ENCODE measurements at regions of chr4 and their contacts with region 1.

Region 1: DNA sequence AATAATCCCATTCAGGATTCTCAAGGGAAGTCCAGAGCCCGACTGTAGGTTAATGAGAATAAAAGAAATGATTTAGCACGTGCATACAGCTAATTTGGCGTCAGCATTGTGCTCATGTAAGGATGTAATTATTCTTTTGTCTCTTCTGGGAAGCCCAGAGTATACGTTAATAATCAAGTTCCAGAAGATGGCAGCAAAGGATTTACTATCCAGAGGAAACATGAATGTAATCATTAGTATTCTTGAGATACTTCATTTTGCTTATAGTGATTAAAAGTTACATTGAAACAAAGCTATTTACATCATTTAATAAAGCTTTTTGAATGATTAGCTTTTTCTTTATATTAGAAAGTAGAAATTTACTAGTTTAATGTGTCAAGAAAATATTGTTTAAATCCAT is 27.1 kb upstream of the MAP9 start:
- DNase-seq: no peak
- H3K4me3 ChIP-seq: no peak overlapping the region
- H3K27ac ChIP-seq: no peak overlapping the region
- H3K27me3 ChIP-seq: no peaks in the 10 kb centered on the region
- CTCF ChIP-seq: peak; percentile 49

Region 2: DNA sequence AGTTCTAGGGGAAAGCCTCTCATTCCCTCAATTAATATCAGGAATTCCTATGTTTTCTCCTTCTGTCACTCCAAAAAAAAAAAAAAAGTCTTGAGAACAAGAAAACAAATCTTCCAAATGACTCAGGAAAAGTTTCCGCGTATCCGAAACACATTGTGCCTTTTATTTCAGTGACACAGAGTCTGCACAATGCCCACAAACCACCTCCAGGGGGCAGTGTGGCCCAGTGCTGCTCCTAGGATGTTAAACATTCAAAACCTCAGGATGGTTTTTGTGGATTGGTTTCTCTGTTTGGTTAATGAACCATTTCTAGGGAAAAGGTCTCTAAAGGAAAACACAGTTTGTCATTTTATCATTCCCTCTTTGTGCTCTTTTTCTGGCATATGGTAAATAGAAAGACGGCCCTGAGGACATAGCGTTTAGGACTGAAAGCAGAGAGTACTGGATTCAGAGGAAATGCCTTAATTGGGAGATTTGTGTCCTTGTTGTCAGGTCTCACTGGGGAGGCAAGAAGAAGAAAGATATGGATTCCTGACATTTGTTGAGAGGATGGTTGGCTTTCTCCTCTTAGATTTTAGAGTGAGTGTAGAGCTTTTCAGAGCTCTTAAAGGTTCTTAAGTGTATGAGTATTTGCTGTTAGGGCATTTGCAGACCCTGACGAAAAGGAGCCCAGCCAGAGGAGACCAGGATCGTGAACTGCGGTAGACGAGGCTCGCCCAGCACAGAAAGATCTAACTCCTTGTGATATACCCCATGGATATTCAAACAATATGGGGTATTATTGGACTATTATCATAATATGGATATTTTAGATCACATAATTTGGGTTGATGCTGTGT is 38.6 kb after region 1 on chr4:
- CTCF ChIA-PET with region 1: interaction called, 11 read pairs
- POLR2A ChIA-PET with region 1: no interaction called
- DNase-seq: no peak
- H3K4me3 ChIP-seq: no peak overlapping the region
- H3K27ac ChIP-seq: no peak overlapping the region
- H3K27me3 ChIP-seq: no peaks in the 10 kb centered on the region
- CTCF ChIP-seq: peak; percentile 99

Region 3: GRCh38 chr4:155777971-155778735 is 374.3 kb after region 1 on chr4:
- CTCF ChIA-PET with region 1: interaction called, 22 read pairs
- POLR2A ChIA-PET with region 1: interaction called, 4 read pairs
- DNase-seq: no peak
- H3K4me3 ChIP-seq: no peak overlapping the region
- H3K27ac ChIP-seq: no peak overlapping the region
- H3K27me3 ChIP-seq: no peaks in the 10 kb centered on the region
- CTCF ChIP-seq: no peak

Region 4: DNA sequence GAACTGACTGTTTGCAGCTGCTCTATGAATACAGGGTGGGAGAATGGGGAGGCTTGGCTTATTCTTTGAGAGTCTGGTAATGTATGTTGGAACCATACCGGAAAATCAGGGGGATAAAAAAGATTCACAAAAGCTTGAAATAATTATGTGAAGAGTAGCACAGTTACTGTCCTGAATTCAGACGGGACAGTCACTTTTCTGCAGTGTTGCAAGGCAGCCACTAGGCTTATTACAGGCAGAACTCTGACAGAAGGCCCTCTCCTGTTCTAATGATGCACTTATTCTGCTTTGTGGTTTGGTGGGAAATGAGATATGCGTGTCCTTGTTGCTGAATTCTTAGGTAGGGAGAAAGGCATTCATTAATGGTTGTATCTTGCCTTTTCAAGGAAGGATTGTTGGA is 392.1 kb after region 1 on chr4:
- CTCF ChIA-PET with region 1: interaction called, 23 read pairs
- POLR2A ChIA-PET with region 1: no interaction called
- DNase-seq: no peak
- H3K4me3 ChIP-seq: no peak overlapping the region
- H3K27ac ChIP-seq: no peak overlapping the region
- H3K27me3 ChIP-seq: no peaks in the 10 kb centered on the region
- CTCF ChIP-seq: peak; percentile 43

Region 5: GRCh38 chr4:155953151-155954114 is 549.5 kb after region 1 on chr4 and contains the start of gene CTSO:
- CTCF ChIA-PET with region 1: interaction called, 103 read pairs
- POLR2A ChIA-PET with region 1: interaction called, 5 read pairs
- DNase-seq: peak; percentile 64
- H3K4me3 ChIP-seq: peak within 1 kb of the TSS; percentile 74
- H3K27ac ChIP-seq: peak within 1 kb of the TSS; percentile 95
- H3K27me3 ChIP-seq: no peaks in the 10 kb centered on the region
- CTCF ChIP-seq: peak; percentile 69
- polyA plus RNA-seq, gene CTSO: 19.0 and 24.0 TPM in 2 replicates

Measured in AG04450 (cell line).